GM10248 (cell line): ENCODE measurements at regions of chr5 and their contacts with region 1.

Region 1: DNA sequence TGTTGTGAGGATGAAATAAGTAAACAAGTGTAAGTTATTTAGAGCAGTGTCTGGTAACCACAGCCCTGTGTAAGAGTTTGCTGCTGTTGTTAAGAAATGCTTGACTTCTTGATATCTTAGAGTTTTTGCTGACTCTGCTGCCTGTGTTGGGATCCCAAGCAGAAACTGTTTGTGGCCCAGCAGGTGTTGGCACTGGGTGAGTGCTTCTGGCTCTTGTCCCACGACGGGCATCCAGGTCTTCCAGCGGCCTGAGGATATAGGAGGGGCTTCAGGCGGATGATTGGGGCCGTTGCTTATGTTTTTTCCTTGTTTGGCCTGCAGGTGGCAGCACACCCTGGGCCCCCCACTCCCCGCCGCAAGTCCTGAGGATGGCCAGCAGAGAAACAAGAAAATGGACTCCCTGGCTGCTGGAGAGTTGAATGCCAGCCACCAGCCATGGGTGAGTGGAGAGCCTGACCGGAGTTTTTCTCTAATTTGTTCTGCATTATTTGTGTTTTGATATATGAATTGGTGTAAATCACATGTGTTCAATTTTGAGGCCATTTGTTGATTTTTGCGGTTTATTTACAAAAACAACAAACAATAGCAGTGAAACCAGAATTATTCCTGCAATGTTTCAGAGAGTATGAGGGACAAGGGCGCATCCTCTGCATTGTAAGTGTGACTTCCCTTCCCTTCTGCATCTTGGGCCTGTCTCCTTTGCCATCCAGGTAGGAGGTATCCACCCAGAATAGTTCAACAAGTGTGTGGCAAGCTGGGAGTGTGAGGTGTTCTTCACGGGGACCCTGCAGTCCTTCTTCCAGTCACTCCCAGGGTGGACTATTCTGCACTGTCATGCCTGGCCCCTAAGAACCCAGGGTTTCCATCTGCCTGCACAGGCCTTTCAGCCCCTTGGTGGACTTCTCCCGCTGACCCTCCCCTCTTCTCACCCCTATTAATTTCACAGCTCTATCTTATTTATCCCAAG is 50.3 kb downstream of the SLC22A5 start:
- DNase-seq: peak; percentile 73
- CTCF ChIP-seq: peak; percentile 86

Region 2: DNA sequence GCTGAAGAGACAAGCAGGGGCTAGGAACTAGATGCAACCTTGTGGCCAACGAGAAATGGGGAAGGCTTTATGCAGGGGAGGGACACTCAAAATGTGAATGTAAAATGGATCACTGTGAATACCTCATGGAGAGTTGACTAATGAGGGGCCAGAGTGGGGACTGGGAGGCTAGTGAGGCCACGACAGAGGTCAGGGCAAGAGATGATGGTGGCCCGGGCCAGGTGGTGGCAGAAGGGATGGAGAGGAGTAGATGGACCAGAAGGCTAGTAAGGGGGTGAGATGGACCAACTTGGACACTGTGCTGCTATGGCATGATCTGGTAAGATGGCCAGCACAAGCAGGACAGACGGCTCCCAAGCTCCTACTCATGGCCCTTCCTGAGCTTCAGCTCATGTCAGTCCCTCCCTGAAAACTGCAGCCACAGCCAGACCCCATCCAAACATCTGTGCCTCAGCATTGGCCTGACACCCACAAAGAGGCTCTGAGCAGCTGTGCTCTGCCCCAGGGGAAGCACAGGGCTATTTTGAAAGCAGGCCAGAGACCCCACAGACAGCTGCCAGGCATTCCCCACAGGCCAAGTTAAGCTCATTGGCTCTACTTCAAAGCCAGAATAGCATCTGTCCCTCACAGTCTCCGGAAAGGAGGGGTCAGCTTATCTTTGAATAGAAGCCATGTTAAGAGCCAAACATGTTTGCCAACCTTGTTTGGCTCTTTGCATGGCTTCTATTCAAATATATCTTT is 214.2 kb before region 1 on chr5:
- CTCF ChIA-PET with region 1: no interaction called
- POLR2A ChIA-PET with region 1: no interaction called
- DNase-seq: peak; percentile 32
- CTCF ChIP-seq: no peak

Region 3: DNA sequence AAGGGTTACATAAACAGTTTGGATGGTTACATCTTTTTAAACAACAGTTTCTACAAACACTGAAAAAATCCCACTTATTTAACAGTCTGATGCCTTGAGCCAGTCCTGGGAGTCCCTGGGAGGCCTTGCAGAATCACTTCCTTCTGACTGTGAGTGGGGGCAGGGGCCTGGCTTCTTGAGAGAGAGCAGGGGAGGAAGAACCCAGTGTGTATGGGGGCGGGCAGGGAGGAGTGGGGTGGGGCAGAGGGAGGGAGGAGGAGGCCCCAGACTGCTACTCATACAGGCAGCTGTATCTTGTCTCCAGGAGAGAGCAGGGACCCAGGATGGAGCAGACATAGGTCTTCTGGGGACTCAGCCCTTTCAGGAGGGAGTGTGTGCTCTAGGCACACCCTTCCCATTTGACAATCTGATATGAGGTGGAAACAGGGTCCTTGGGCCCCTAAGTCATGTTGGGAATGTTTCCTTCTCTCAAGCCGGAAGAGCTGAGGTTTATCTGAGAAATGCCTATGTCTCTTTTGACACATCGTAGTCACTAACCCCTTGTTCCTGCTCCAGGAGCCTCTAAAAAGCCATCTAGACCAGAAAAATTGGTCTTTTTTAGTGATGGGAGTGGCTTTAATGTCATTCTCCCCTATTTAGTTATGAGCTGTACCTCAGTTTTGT is 17.9 kb after region 1 on chr5:
- CTCF ChIA-PET with region 1: interaction called, 59 read pairs
- POLR2A ChIA-PET with region 1: no interaction called
- DNase-seq: peak; percentile 82
- CTCF ChIP-seq: no peak

Region 4: DNA sequence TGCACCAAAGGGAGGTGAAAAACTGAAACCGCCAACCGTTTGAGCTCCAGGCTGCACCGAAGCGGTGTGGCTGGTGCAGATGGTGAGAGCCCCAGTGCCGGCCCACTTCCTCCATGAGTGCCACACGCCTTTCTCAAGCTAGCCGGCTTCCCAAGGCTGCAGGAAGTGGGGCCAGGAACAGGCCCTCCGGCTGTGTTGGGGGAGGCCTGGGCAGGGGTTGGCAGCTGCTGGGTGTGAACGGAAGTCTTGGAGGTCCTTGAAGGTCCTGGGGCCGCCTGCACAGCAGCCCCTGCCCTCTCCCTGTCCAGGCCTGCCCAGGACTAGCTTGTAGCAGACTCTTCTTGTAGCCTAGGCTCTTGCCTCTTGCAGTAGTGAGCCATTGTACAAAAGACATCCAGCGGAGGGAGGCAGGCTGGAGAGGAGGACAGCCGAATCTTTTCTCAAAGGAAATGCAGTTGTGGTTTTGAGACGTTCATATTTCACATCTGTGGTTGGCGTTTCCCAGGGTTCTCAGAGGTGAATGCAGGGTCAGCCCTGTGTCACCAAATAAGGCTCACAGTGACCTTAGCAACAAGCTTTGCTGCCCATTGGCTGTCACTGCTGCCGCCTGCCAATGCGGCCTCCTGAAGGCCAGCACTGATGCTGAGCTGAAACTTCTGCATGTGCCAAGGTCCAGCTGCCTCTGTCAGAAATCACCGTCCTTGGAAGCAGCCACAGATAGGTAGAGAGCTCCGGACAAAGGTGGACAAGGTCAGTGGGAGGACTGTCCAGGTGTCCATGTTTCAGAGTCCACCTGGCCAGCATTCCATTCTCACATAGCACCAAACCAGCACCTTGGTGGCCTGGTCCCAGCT is 46.9 kb after region 1 on chr5:
- CTCF ChIA-PET with region 1: interaction called, 13 read pairs
- POLR2A ChIA-PET with region 1: interaction called, 7 read pairs
- DNase-seq: peak; percentile 73
- CTCF ChIP-seq: no peak

Region 5: GRCh38 chr5:132479111-132479951 is 59.5 kb after region 1 on chr5:
- CTCF ChIA-PET with region 1: interaction called, 61 read pairs
- POLR2A ChIA-PET with region 1: interaction called, 7 read pairs
- DNase-seq: no peak
- CTCF ChIP-seq: no peak